ENCODE measurements at regions of chr5 and their contacts with region 1.

Region 1: GRCh38 chr5:138809391-138809790 is 56.2 kb downstream of the CTNNA1 start:
- DNase-seq: no peak
- CTCF ChIP-seq: no peak

Region 2: GRCh38 chr5:138824924-138825863 is 15.8 kb after region 1 on chr5:
- CTCF ChIA-PET with region 1: interaction called, 30 read pairs
- POLR2A ChIA-PET with region 1: no interaction called
- DNase-seq: peak; percentile 56
- CTCF ChIP-seq: peak; percentile 40

Region 3: DNA sequence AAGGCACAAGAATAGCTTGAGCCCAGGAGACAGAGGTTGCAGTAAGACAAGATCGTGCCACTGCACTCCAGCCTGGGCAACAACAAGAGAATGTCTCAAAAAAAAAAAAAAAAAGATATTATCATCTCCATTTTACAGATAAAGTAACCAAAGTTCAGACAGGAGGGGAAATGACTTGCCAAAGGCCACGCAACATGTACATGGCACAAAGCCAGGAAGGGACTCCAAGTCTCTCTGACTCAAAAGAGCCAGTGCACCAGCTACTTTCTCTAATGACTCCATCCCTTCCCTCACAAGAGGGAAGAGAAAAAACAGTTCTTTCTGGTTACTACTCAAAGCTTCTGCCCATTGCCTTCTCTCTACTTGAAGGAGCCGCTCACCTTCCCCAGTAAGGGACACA is 354.6 kb after region 1 on chr5:
- CTCF ChIA-PET with region 1: no interaction called
- POLR2A ChIA-PET with region 1: no interaction called
- DNase-seq: no peak
- CTCF ChIP-seq: no peak

Measured in GM10248 (cell line).